Activated CD4-positive, alpha-beta T cell treated with anti-CD3 and anti-CD28 coated beads for 36 hours (primary cell): ENCODE measurements at regions of chr11 and their contacts with region 1.

Region 1: GRCh38 chr11:568306-569157 is 7.7 kb upstream of the PHRF1 start:
- DNase-seq: peak; percentile 97
- ATAC-seq: peak; percentile 93
- H3K4me3 Mint-ChIP-seq: peak overlapping the region; percentile 88
- H3K27ac Mint-ChIP-seq: peak overlapping the region; percentile 72
- H3K4me1 Mint-ChIP-seq: no peaks in the 10 kb centered on the region
- H3K27me3 Mint-ChIP-seq: no peaks in the 10 kb centered on the region

Region 2: DNA sequence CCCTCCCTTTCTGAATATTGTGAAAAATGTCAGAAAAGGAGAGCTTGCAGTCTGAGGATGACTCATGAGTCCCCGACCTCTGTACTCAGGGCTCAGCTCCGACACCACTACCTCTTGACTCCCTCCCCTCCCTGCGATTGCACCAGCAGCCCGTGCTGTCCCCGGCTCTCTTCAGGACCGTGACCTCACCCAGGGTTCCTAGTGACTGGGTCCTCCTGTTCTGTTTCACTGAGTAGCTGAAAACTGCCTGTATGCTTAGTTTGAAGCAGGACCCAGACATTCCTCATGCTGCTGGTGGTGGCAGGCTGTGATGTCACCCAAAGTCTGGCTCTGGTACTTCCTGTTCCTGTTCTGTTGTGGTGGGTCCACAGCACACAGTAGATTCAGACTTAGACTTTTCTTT is 19.4 kb after region 1 on chr11:
- CTCF ChIA-PET with region 1: no interaction called
- POLR2A ChIA-PET with region 1: no interaction called
- intact Hi-C with region 1: loop called in 1 of 2 experiments (anchors 1 kb)
- DNase-seq: peak; percentile 87
- ATAC-seq: peak; percentile 99
- H3K4me3 Mint-ChIP-seq: peak overlapping the region; percentile 64
- H3K27ac Mint-ChIP-seq: peak overlapping the region; percentile 98
- H3K4me1 Mint-ChIP-seq: peaks cover 21% of the 10 kb centered on the region
- H3K27me3 Mint-ChIP-seq: no peaks in the 10 kb centered on the region